Vagina (tissue), 2 donors: ENCODE measurements at regions of chr10 and their contacts with region 1.

Region 1: DNA sequence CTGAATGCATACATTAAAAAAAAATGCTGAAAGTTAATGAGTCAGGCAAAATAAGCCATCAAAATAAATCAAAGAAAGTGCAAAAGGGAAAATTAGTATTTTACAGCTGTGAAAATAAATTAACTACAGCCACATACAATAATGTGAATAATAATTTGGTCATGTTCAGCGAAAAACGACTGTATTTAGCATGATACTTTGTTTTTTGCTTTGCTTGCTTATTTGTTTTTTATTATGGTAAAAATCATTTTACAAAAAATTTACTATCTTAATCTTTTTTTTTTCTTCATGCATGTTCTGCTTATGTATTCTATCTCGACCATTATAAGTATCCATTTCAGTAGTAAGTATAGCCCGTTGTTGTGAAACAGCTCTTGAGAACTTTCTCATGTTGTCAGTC is 77.1 kb downstream of the RAB18 start:
- DNase-seq: no peak
- H3K4me3 ChIP-seq: no peak overlapping the region
- H3K27ac ChIP-seq: no peak overlapping the region
- H3K4me1 ChIP-seq: no peaks in the 10 kb centered on the region
- H3K27me3 ChIP-seq: no peaks in the 10 kb centered on the region
- CTCF ChIP-seq: no peak
- POLR2A ChIP-seq: no peak

Region 2: DNA sequence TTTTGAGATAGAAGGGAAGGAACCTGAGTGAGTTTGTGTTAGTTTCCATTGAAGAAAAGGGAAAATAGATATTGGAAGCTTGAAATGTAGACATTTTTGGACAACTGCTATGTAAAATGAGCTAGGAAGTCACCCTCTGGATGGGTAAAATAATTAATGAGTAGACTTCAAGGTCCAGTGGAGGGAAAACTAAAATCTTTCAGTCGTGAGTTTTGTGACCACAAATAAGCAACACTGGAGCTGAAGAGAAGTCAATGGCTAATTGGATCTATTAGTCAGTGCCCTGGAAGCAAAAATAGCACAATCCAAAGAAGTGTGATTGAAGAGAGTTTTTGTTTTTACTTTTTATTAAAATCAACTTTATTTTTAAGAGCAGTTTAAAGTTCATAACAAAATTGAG is 1523.8 kb before region 1 on chr10:
- intact Hi-C with region 1: loop called (anchors 10 kb)
- DNase-seq: no peak
- H3K4me3 ChIP-seq: no peak overlapping the region
- H3K27ac ChIP-seq: no peak overlapping the region
- H3K4me1 ChIP-seq: no peaks in the 10 kb centered on the region
- H3K27me3 ChIP-seq: no peaks in the 10 kb centered on the region
- CTCF ChIP-seq: no peak
- POLR2A ChIP-seq: no peak